Left ventricle myocardium superior (tissue), 1 donor: ENCODE measurements at regions of chr6 and their contacts with region 1.

Region 1: GRCh38 chr6:88982720-88983119 is 19.3 kb upstream of the RNGTT start:
- DNase-seq: no peak
- ATAC-seq: peak; percentile 96

Region 2: DNA sequence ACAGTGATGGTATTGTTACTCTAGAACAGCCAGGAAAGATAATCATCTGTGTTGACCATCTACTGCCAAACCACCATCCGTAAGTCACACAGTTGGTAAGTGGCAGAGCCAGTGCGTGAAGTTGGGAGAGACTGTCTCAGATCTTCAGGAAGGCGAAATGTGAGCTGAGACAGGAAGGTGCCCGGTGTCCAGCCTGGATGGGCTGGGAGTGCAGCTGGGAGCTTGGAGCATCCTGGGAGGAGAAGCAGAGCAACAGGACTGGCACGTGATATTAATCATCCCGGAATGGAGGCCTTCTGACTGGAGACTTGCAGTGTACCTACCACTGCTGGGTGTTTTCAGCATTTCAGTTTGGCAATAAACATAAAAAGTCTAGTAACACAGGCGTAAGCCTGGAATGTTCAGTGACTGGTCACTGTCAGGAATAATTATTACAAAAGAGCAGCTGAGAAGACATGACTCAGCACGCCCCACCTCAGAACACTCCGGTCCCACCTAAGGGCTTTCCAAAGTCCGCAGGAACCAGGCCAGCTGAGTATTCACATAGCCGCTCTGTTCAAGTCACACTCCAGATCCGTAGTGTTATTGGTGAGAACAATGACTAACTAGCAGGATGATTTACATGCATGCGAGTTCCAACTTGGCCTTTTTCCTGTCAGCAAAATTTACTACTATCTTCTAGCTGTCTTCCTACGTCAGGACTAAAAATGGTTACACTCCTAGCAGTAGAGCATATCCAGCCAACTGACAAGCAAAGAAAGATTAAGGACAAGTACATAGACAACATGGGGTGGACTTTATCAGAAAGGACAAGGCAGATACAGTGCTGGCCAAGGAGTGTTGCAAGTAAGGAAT is 52.8 kb after region 1 on chr6:
- intact Hi-C with region 1: loop called (anchors 10 kb)
- DNase-seq: peak; percentile 83
- ATAC-seq: peak; percentile 95

Region 3: GRCh38 chr6:89080542-89081422 is 98.1 kb after region 1 on chr6 and contains the start of gene PNRC1:
- intact Hi-C with region 1: loop called (anchors 10 kb)
- DNase-seq: peak; percentile 100
- ATAC-seq: peak; percentile 90
- total RNA-seq, gene PNRC1: 161 TPM

Region 4: GRCh38 chr6:89197141-89197540 is 214.4 kb after region 1 on chr6:
- intact Hi-C with region 1: no loop called
- DNase-seq: no peak
- ATAC-seq: no peak

Region 5: GRCh38 chr6:89242574-89243330 is 260.0 kb after region 1 on chr6:
- intact Hi-C with region 1: loop called (anchors 2 kb)
- DNase-seq: no peak
- ATAC-seq: peak; percentile 28

Region 6: GRCh38 chr6:89412071-89413005 is 429.6 kb after region 1 on chr6 and contains the start of gene RRAGD:
- intact Hi-C with region 1: no loop called
- DNase-seq: peak; percentile 88
- ATAC-seq: peak; percentile 89
- total RNA-seq, gene RRAGD: 160 TPM